BJ (cell line): ENCODE measurements at regions of chr7 and their contacts with region 1.

Region 1: DNA sequence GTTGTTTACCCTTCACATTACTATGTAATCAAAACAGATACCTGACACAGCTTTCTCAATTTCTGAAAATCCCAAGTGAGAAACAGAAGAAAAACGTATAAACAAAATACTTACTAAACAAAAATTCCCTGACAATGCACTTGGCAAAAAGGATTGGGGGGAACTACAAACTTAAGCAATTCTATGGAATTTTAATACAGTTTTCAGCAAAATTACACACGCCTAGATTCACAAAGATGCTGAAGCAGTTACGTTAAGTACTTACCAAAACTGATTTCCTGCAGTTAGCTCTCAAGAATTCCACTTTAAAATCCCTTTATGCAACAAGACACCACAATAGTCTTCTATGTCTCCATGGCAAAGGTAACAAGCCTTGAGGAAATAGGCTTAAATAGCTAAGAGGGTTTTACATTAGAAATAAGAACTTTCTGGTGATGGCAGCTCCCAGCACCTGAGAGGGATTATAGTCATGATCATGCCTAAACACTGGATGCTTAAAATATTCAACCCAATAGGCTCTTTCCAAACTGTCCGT is 10.8 kb downstream of the TOMM7 start:
- DNase-seq: no peak
- H3K4me3 ChIP-seq: no peak overlapping the region
- H3K27me3 ChIP-seq: no peaks in the 10 kb centered on the region
- CTCF ChIP-seq: no peak

Region 2: GRCh38 chr7:22627136-22627535 is 184.7 kb before region 1 on chr7:
- CTCF ChIA-PET with region 1: no interaction called
- POLR2A ChIA-PET with region 1: no interaction called
- DNase-seq: no peak
- H3K4me3 ChIP-seq: no peak overlapping the region
- H3K27me3 ChIP-seq: no peaks in the 10 kb centered on the region
- CTCF ChIP-seq: no peak

Region 3: DNA sequence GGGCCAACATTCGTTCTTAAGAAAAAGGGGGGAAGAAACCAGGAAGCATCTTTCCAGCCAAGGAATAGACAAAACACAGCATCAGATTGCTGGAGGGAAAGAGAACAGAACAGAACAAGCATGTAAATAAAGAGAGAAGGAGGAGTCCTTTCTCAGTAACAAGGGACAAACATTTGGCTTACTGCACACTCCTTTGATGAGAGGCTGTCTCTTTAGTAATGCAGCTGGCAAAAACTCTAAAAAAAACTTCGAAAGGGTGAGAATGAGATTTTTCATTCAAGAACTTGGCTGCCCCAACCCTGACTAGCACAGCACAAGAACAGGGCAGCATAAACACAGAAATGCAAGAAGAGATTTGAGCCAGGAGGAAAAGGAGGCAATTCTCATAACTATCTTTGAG is 123.7 kb before region 1 on chr7:
- CTCF ChIA-PET with region 1: no interaction called
- POLR2A ChIA-PET with region 1: no interaction called
- DNase-seq: no peak
- H3K4me3 ChIP-seq: no peak overlapping the region
- H3K27me3 ChIP-seq: no peaks in the 10 kb centered on the region
- CTCF ChIP-seq: no peak

Region 4: GRCh38 chr7:22822486-22823141 is 10.8 kb after region 1 on chr7 and contains the start of gene TOMM7:
- CTCF ChIA-PET with region 1: interaction called, 10 read pairs
- POLR2A ChIA-PET with region 1: no interaction called
- DNase-seq: peak; percentile 87
- H3K4me3 ChIP-seq: peak within 1 kb of the TSS; percentile 67
- H3K27me3 ChIP-seq: peaks cover 1% of the 10 kb centered on the region; the same call in 1 of the 2 replicates
- CTCF ChIP-seq: no peak
- polyA plus RNA-seq, gene TOMM7: 346 and 1,232 TPM in 2 replicates